ENCODE measurements at regions of chr16 and their contacts with region 1.

Region 1: DNA sequence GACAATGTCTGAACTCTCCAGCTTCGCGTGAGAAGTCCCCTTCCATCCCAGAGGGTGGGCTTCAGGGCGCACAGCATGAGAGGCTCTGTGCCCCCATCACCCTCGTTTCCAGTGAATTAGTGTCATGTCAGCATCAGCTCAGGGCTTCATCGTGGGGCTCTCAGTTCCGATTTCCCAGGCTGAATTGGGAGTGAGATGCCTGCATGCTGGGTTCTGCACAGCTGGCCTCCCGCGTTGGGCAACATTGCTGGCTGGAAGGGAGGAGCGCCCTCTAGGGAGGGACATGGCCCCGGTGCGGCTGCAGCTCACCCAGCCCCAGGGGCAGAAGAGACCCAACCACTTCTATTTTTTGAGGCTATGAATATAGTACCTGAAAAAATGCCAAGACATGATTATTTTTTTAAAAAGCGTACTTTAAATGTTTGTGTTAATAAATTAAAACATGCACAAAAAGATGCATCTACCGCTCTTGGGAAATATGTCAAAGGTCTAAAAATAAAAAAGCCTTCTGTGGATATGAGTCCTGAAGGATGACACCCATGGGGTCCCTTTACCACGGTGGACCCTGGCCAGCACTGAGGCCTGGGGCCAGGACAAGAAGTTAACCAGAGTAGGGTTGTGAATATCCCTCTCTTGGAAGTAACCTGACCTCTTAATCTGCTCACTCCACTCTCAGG is 10.5 kb upstream of the ITGAD start:
- DNase-seq: peak; percentile 81
- H3K4me3 Mint-ChIP-seq: no peak overlapping the region
- H3K27ac Mint-ChIP-seq: no peak overlapping the region
- H3K4me1 Mint-ChIP-seq: peaks cover 15% of the 10 kb centered on the region
- H3K27me3 Mint-ChIP-seq: peaks cover 5% of the 10 kb centered on the region

Region 2: DNA sequence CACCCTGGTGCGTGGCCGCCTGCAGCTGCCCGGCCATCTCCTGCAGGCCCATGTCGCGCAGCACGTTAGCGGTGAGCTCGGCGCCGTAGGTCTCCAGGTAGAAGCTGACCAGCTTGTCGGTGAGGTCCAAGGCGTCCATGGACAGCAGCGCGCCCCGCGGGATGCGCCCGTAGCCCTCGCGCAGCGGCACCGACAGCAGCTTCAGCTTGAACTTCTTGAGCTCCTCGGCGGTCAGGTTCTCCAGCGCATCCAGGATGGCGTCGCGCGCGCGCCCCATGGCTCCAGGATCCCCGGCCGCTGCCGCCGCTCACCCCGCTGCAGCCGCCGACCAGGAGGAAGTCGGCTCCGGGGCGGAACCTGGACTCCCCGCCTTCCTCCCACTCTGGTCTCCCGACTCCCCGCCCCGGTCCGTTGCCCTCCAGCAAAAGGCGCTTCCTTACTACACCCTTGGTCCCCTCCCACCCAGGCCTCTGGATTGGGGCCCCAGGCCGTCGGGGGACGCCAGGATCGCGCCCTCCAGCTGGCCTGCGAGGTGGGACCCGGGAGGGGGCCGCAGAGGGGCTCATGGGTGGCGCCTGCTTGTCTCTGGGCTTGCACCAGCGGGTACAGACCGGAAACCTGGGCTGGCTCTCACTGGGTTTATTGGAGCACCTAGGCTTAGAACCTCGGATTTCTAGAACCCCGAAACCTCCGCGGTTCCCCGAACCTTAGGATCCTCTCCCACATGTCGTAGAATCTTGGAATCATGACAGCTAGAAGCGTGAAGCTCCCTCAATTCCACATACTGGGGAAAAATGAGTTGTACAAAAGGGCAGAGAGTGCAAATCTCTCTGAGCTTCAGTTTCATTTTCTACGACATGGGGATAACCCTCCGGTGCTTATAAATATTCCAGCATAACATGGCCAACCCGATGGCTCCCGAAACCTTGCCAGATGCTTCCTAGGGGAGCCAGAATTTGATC is 179.9 kb before region 1 on chr16 and contains the start of gene PYCARD:
- CTCF ChIA-PET with region 1: interaction called, 8 read pairs
- intact Hi-C with region 1: loop called (anchors 5 kb)
- DNase-seq: peak; percentile 31
- H3K4me3 Mint-ChIP-seq: peak within 1 kb of the TSS; percentile 71
- H3K27ac Mint-ChIP-seq: no peak within 1 kb of the TSS
- H3K4me1 Mint-ChIP-seq: peaks cover 46% of the 10 kb centered on the region
- H3K27me3 Mint-ChIP-seq: no peaks in the 10 kb centered on the region
- total RNA-seq, gene PYCARD: 2.4 to 2.5 TPM

Region 3: GRCh38 chr16:31301708-31302400 is 80.8 kb before region 1 on chr16:
- CTCF ChIA-PET with region 1: no interaction called
- intact Hi-C with region 1: loop called (anchors 10 kb)
- DNase-seq: peak; percentile 21
- H3K4me3 Mint-ChIP-seq: no peak overlapping the region
- H3K27ac Mint-ChIP-seq: no peak overlapping the region
- H3K4me1 Mint-ChIP-seq: peaks cover 8% of the 10 kb centered on the region
- H3K27me3 Mint-ChIP-seq: peaks cover 7% of the 10 kb centered on the region

Region 4: GRCh38 chr16:31327646-31328242 is 54.9 kb before region 1 on chr16:
- CTCF ChIA-PET with region 1: no interaction called
- intact Hi-C with region 1: no loop called
- DNase-seq: no peak
- H3K4me3 Mint-ChIP-seq: no peak overlapping the region
- H3K27ac Mint-ChIP-seq: no peak overlapping the region
- H3K4me1 Mint-ChIP-seq: peaks cover 9% of the 10 kb centered on the region
- H3K27me3 Mint-ChIP-seq: peaks cover 10% of the 10 kb centered on the region